CD4-positive, alpha-beta memory T cell (primary cell): ENCODE measurements at regions of chr1 and their contacts with region 1.

Region 1: DNA sequence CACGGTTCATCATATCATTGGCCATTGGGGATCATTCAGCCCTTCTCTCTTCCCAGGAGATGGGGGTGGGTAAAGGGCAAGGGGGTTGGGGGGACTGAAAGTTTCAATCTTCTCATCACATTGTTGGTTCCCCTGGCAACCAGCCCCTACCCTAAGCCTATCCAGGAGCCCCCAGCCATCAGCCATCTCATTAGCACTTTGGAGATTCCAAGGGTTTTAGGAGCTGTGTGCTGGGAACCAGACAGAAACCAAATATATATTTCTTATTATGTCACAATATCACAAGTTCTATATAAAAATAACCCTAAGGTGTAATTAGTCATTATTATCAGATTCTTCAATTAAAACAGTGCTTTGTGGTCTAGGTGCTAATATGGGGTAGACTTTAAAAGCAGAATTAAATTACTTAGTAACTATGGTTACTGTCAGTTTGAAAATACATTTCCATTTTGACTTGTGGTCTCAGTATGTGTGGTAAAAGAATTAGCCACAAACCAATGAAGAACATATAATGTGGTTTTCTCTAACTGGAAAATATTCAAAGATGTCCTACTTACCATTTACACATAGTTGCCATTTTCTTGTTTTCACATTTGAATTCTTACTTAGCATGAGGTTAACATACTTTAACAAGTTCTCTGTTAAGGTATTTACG is 28.1 kb downstream of the IL23R start:
- DNase-seq: peak; percentile 36 to 78 (median 72)
- H3K4me3 ChIP-seq: peak overlapping the region in 1 of 2 donors; percentile 24
- H3K4me3 Mint-ChIP-seq: peak overlapping the region in 7 of 8 donors; percentile 5 to 65 (median 47)
- H3K27ac ChIP-seq: no peak overlapping the region
- H3K27ac Mint-ChIP-seq: peak overlapping the region in 6 of 7 donors; percentile 29 to 85 (median 78)
- H3K4me1 ChIP-seq: peaks cover 50% of the 10 kb centered on the region
- H3K4me1 Mint-ChIP-seq: peaks cover 4 to 38% (median 21%) of the 10 kb centered on the region in 4 donors
- H3K27me3 ChIP-seq: no peaks in the 10 kb centered on the region
- H3K27me3 Mint-ChIP-seq: no peaks in the 10 kb centered on the region

Region 2: DNA sequence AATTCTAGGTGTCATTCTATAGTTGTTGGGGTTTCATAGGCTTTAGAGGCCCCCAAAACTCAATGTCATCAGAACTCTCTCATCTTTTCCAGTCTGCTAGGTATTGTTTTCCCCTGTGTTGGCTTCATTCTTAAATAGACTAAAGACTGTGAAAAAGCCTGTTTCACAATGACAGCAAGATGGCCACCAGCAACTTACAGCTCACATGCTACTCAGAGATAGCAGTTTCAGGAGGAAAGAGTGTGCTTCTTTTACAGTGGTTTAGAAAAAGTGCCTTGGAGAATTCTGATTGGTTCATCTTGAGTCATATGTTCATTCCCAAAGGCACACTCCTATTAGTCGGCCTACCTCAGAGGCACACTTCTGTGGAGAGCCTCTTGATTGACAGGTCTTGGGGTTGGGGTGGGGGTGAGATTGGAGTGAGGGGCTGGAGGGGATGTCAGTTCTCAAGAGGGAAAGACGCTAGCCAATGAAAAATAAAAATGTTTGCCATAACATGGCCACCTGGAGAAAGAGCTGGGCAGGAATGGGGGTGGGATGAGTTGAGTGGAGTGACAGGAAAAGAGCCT is 19.5 kb before region 1 on chr1:
- CTCF ChIA-PET with region 1: no interaction called
- POLR2A ChIA-PET with region 1: interaction called, 15 read pairs
- intact Hi-C with region 1: loop called (anchors 1 kb)
- DNase-seq: no peak
- H3K4me3 ChIP-seq: no peak overlapping the region
- H3K4me3 Mint-ChIP-seq: peak overlapping the region in 2 of 8 donors; percentile 21 to 40
- H3K27ac ChIP-seq: no peak overlapping the region
- H3K27ac Mint-ChIP-seq: peak overlapping the region in 1 of 7 donors; percentile 52
- H3K4me1 ChIP-seq: peaks cover 40% of the 10 kb centered on the region
- H3K4me1 Mint-ChIP-seq: peaks cover 30 to 59% (median 44%) of the 10 kb centered on the region in 4 donors
- H3K27me3 ChIP-seq: no peaks in the 10 kb centered on the region
- H3K27me3 Mint-ChIP-seq: peaks cover 5 to 7% of the 10 kb centered on the region in 2 donors